Activated naive CD8-positive, alpha-beta T cell treated with anti-CD3 and anti-CD28 coated beads, Interleukin-2, amount 10 ng/mL, durations not matched to agents 7 days and 5 days (primary cell): ENCODE measurements at regions of chr3 and their contacts with region 1.

Region 1: GRCh38 chr3:27880969-27881892 is 159.1 kb upstream of the EOMES start:
- DNase-seq: peak; percentile 44
- ATAC-seq: peak; percentile 70
- H3K4me3 Mint-ChIP-seq: peak overlapping the region; percentile 87
- H3K27ac Mint-ChIP-seq: peak overlapping the region; percentile 94
- H3K4me1 Mint-ChIP-seq: peaks cover 45% of the 10 kb centered on the region
- H3K27me3 Mint-ChIP-seq: no peaks in the 10 kb centered on the region

Region 2: DNA sequence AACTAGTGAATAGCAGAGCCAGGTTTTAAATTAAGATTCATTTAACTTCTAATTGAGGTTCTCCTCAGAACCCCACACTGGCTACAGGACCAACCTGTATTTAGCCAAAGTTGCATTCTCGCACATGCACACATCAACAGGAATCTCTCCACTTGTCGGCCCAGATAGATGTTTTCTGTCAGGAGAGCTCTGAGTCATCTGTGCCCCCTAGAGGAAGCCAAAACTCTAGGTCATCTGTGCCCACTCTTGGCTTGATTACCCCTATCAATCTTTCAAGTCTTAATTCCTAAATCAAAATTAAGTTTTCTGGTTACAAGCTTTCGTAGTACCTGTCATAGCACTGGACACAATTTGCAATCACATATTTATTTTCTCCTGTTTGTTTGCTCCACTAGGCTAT is 54.2 kb before region 1 on chr3:
- POLR2A ChIA-PET with region 1: no interaction called
- DNase-seq: no peak
- ATAC-seq: no peak
- H3K4me3 Mint-ChIP-seq: no peak overlapping the region
- H3K27ac Mint-ChIP-seq: no peak overlapping the region
- H3K4me1 Mint-ChIP-seq: peaks cover 2% of the 10 kb centered on the region
- H3K27me3 Mint-ChIP-seq: no peaks in the 10 kb centered on the region

Region 3: DNA sequence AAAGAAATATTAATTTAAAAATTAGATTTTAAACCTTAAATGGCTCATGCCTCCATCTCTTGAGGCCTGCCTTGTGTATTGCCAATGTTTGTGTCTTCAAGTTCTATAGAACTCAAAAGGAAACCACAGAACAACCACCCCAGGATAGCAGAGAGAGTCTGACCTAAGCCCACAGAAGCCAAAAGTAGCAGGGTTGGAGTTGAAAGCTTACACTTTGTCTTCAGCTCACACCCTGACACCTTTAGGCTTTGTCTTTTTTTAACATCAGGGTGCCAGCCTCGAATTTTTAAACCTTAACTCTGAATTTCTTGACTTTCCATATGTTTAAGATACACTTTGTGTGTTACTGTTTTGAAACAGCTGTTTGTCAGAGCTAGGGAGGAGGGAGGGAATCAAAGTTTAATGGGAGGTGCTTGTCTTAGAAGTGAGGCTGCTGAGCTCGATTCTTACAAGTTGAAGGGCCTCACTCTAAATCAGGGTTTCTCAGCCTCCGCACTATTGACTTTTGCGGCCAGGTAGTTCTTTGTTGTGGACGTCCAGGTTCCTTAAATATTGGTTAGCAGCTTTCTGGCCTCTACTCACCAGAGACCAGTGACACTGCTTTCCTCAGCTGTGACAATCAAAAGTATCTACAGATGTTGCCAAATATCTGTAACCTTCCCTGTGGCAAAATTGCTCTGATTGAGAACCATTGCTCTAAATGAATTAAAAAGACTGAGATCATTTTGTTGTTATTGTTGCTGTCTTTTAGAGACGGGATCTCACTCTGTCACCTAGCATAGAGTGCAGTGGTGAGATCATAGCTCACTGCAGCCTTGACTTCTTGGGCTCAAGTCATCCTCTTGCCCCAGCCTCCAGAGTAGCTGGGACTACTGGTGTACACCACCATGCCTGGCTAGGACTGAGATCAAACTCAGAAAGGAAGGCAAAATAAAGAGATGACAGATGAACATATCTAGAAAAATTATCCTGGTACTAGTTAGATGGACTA is 19.9 kb before region 1 on chr3:
- POLR2A ChIA-PET with region 1: interaction called, 11 read pairs
- DNase-seq: peak; percentile 33
- ATAC-seq: peak; percentile 96
- H3K4me3 Mint-ChIP-seq: peak overlapping the region; percentile 17
- H3K27ac Mint-ChIP-seq: peak overlapping the region; percentile 95
- H3K4me1 Mint-ChIP-seq: peaks cover 31% of the 10 kb centered on the region
- H3K27me3 Mint-ChIP-seq: no peaks in the 10 kb centered on the region